H1 (cell line): ENCODE measurements at regions of chr15 and their contacts with region 1.

Region 1: DNA sequence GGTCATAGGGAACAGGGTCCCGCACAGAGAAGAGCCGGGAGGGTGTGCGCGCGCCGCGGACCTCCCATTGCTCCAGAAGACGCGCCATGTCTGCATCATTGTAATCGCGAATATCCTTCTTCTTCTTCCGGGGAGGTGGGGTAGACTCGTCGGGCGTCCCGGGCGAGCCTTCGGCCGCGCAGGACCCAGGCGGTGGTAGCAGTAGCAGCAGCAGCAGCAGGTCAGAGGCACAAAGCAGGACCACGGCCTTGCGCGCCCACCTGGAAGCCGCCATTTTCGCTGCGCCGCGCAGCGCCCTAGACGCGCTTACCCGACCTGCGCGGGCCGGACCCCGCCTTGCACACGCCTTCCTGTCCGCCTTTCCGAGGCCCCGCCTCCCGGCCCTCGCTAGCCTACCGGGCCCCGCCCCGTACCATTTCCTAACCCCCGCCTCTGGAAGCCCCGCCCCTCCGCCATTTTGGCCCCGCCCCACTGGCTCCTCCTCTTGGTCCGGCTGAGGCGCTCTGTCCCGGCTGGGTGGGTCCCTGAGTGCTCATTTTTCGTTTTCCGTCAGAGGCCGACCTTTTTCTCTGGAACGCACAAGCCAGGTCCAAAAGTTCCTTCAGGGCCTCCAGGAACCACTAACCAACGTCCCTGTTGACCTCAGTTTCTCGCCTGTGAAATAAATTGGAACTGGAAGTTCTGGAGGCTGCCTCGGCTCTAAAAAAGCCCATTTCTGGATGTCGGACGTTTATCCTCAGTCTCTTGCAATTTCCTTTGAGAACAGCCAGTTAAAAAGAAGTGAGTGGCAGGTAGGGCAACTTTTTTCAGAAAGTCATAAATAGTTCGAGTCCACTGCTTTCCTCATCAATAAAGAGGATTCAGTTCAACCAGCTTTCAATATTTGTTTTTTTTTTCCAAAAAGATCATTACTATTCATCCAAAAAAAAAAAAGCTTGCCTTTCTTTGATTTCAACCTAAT is at the start of gene MESD:
- DNase-seq: peak; percentile 86 to 98
- H3K4me3 ChIP-seq: peak within 1 kb of the TSS; percentile 74 to 100 (median 94)
- H3K27ac ChIP-seq: peak within 1 kb of the TSS; percentile 98
- H3K4me1 ChIP-seq: peaks cover 0 to 8% (median 2%) of the 10 kb centered on the region in 4 experiments; a peak in 3 of 7 replicates
- H3K27me3 ChIP-seq: no peaks in the 10 kb centered on the region
- CTCF ChIP-seq: no peak
- EP300 ChIP-seq: no peak
- POLR2A ChIP-seq: peak; percentile 97 to 99
- RAD21 ChIP-seq: no peak
- total RNA-seq, gene MESD: 28.3 and 30.2 TPM in 2 replicates

Region 2: DNA sequence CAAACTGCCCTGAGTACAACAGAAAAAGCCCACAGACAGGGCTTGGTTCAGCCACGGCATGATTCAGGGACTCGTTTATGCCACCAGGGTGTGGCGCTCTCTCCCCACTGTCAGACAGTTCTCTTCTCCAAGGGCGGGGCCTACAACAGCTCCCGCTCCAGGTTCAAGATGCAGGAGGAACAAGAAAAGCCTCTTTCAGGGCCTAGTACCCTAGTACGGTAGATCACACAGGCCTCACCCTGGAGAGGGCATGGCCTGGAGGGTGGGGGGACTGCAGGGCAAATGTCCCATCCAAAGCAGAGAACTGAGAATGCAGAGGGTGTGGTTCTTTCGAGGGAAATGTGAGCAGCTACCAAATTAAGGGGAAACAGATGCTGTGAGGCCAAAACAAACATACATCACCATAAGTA is 12.2 kb before region 1 on chr15:
- CTCF ChIA-PET with region 1: interaction called, 21 read pairs
- POLR2A ChIA-PET with region 1: interaction called, 10 read pairs
- DNase-seq: peak in 1 of 2 experiments; percentile 79
- H3K4me3 ChIP-seq: no peak overlapping the region
- H3K27ac ChIP-seq: no peak overlapping the region
- H3K4me1 ChIP-seq: peaks cover 0 to 9% (median 3%) of the 10 kb centered on the region in 4 experiments; a peak in 3 of 7 replicates
- H3K27me3 ChIP-seq: no peaks in the 10 kb centered on the region
- CTCF ChIP-seq: peak; percentile 82 to 84 (median 83)
- EP300 ChIP-seq: no peak
- POLR2A ChIP-seq: no peak
- RAD21 ChIP-seq: peak; percentile 81 to 88